ENCODE measurements at regions of chr14 and their contacts with region 1.

Region 1: GRCh38 chr14:73759714-73760597 is 45.8 kb upstream of the PNMA1 start:
- DNase-seq: peak; percentile 91 to 97 (median 93)
- ATAC-seq: peak; percentile 89
- H3K4me3 ChIP-seq: peak overlapping the region; percentile 72
- H3K4me3 Mint-ChIP-seq: peak overlapping the region; percentile 85 to 96 (median 90)
- H3K27ac ChIP-seq: peak overlapping the region; percentile 86
- H3K27ac Mint-ChIP-seq: peak overlapping the region; percentile 95 to 98 (median 97)
- H3K4me1 ChIP-seq: peaks cover 63 to 65% of the 10 kb centered on the region in 2 donors
- H3K4me1 Mint-ChIP-seq: peaks cover 57 to 87% (median 79%) of the 10 kb centered on the region in 7 donors
- H3K27me3 ChIP-seq: no peaks in the 10 kb centered on the region
- H3K27me3 Mint-ChIP-seq: no peaks in the 10 kb centered on the region

Region 2: GRCh38 chr14:72893636-72894321 is 866.2 kb before region 1 on chr14 and contains the start of gene DPF3:
- CTCF ChIA-PET with region 1: no interaction called
- POLR2A ChIA-PET with region 1: no interaction called
- intact Hi-C with region 1: no loop called
- DNase-seq: peak; percentile 80 to 91 (median 86)
- ATAC-seq: peak; percentile 99
- H3K4me3 ChIP-seq: peak within 1 kb of the TSS; percentile 74
- H3K4me3 Mint-ChIP-seq: peak within 1 kb of the TSS; percentile 91 to 99 (median 97)
- H3K27ac ChIP-seq: peak within 1 kb of the TSS; percentile 51
- H3K27ac Mint-ChIP-seq: peak within 1 kb of the TSS; percentile 22 to 94 (median 56)
- H3K4me1 ChIP-seq: peaks cover 9 to 20% of the 10 kb centered on the region in 2 donors
- H3K4me1 Mint-ChIP-seq: peaks cover 20 to 36% (median 24%) of the 10 kb centered on the region in 7 donors
- H3K27me3 ChIP-seq: peaks cover 6 to 10% of the 10 kb centered on the region in 2 donors
- H3K27me3 Mint-ChIP-seq: peaks cover 37 to 72% (median 53%) of the 10 kb centered on the region in 5 donors
- total RNA-seq, gene DPF3: 0.24 to 5.5 (median 0.61) TPM in 4 of 5 experiments, not detected in the other

Region 3: DNA sequence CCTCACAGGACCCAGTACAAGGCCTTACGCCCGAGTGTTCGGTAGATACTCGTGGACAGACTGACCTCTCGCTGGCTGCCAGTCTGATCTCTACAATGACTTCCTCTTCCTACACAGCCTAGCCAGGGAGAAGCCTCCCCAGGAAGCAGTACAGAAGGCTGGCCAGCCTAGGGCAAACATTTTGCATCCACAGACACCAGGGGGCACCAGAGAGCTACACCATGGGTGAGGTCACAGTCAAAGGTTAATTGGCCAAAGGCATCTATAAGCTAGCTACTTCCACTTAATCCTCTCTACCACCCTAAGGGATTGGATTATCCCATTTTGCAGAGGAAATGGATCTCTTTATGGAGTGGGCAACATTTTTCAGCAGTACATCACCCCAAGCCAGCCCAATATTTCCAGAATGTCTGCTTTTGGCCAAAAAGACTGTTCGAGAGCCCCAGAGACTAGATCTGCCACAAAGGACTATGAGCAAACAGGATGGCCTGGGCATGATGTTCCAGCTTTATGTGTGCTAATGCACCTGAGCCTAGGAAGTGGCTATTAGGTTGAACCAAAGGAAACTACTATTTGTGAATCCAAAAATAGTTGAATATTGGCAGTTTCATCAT is 31.1 kb before region 1 on chr14:
- CTCF ChIA-PET with region 1: interaction called, 31 read pairs
- POLR2A ChIA-PET with region 1: interaction called, 31 read pairs
- intact Hi-C with region 1: loop called (anchors 1 kb)
- DNase-seq: peak; percentile 65 to 91 (median 81)
- ATAC-seq: peak; percentile 96
- H3K4me3 ChIP-seq: no peak overlapping the region
- H3K4me3 Mint-ChIP-seq: peak overlapping the region in 1 of 10 donors; percentile 43
- H3K27ac ChIP-seq: no peak overlapping the region
- H3K27ac Mint-ChIP-seq: peak overlapping the region; percentile 60 to 90 (median 84)
- H3K4me1 ChIP-seq: peaks cover 4 to 12% of the 10 kb centered on the region in 2 donors
- H3K4me1 Mint-ChIP-seq: peaks cover 5 to 42% (median 16%) of the 10 kb centered on the region in 7 donors
- H3K27me3 ChIP-seq: no peaks in the 10 kb centered on the region
- H3K27me3 Mint-ChIP-seq: no peaks in the 10 kb centered on the region

Region 4: DNA sequence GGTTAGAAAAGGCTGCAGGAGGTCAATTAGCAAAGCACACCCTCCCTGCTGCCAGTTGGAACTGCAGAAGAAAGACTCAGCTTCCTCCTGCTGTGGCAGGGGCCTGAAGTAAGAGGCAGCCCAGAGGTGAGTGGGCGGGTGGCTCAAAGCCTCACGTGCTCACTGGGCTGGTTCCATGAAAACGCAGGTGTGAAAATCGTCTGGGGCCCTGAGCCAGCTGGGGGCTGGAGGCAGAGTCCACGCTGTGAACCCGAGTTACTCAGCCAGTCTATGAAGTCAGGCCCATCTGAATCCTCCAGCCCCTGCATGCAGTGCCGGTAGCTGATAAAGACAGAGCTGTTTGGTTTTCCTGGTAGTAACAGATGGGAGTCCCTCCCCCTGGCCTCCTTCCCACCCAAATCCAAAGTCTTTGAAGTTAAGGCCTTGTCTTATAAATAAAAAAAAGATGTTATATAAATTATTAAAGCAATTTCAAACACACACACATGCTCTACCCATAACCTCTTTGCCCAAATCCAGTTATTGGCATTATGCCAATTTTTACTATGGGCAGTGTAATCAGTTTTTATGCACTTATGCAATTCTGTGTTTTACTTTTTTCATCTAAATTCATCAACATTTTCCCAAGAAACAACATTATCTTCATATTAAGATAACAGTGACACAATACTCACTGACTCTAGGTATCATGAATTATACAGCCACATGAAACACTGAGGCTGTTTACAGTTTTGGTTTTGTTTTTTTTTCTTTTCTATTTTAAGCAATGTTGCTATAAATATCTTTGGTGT is 12.1 kb after region 1 on chr14:
- CTCF ChIA-PET with region 1: interaction called, 12 read pairs
- POLR2A ChIA-PET with region 1: interaction called, 81 read pairs
- intact Hi-C with region 1: loop called (anchors 1 kb)
- DNase-seq: peak in 8 of 9 donors; percentile 57 to 73 (median 65)
- ATAC-seq: peak; percentile 82
- H3K4me3 ChIP-seq: peak overlapping the region; percentile 24
- H3K4me3 Mint-ChIP-seq: peak overlapping the region; percentile 63 to 81 (median 74)
- H3K27ac ChIP-seq: peak overlapping the region; percentile 69
- H3K27ac Mint-ChIP-seq: peak overlapping the region; percentile 80 to 94 (median 92)
- H3K4me1 ChIP-seq: peaks cover 56 to 65% of the 10 kb centered on the region in 2 donors
- H3K4me1 Mint-ChIP-seq: peaks cover 57 to 79% (median 69%) of the 10 kb centered on the region in 7 donors
- H3K27me3 ChIP-seq: no peaks in the 10 kb centered on the region
- H3K27me3 Mint-ChIP-seq: no peaks in the 10 kb centered on the region

Region 5: GRCh38 chr14:73785873-73786695 is 26.1 kb after region 1 on chr14:
- CTCF ChIA-PET with region 1: interaction called, 23 read pairs
- POLR2A ChIA-PET with region 1: interaction called, 253 read pairs
- intact Hi-C with region 1: loop called (anchors 1 kb)
- DNase-seq: peak; percentile 41 to 65 (median 60)
- ATAC-seq: peak; percentile 74
- H3K4me3 ChIP-seq: peak overlapping the region; percentile 91
- H3K4me3 Mint-ChIP-seq: peak overlapping the region; percentile 87 to 99 (median 97)
- H3K27ac ChIP-seq: peak overlapping the region; percentile 96
- H3K27ac Mint-ChIP-seq: peak overlapping the region; percentile 92 to 97 (median 94)
- H3K4me1 ChIP-seq: peaks cover 45% of the 10 kb centered on the region in 2 donors
- H3K4me1 Mint-ChIP-seq: peaks cover 50 to 73% (median 66%) of the 10 kb centered on the region in 7 donors
- H3K27me3 ChIP-seq: no peaks in the 10 kb centered on the region
- H3K27me3 Mint-ChIP-seq: no peaks in the 10 kb centered on the region

Region 6: DNA sequence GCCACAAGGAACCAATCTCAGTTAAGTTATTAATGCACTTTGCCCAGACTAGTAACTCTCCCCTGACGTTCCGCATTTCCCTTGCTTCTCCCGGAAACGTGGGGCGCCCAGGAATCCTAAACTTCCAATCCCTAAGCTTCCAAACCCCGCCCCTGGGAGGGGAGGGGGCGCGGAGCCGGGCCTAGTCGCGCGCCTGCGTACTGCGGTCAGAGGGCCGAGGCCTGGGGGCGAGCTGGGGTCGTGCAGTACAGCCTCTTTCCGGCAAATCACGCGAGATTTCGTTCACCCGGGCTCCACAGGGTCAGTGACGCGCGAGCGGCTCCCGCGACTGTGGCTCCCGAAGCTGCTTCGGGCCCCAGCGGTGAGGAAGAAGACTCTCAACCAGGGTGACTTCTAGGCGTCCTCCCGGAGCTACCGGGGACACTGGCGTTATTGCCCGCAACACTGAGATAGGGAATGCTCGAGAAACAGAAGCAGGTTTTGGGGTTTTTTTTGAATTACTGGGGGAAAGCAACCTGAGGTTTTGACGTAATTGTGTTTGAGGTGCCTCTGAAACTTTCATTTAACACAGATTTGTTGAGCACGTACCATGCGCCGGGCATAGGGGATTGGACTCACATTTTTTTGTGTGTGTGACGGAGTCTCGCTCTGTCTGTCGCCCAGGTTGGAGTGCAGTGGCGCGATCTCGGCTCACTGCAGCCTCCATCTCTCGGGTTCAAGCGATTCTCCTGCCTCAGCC is 91.9 kb after region 1 on chr14 and contains the start of gene PTGR2:
- CTCF ChIA-PET with region 1: interaction called, 3 read pairs
- POLR2A ChIA-PET with region 1: interaction called, 6 read pairs
- intact Hi-C with region 1: loop called in 1 of 2 experiments (anchors 1 kb)
- DNase-seq: peak; percentile 79 to 92 (median 86)
- ATAC-seq: peak; percentile 98
- H3K4me3 ChIP-seq: peak within 1 kb of the TSS; percentile 76
- H3K4me3 Mint-ChIP-seq: peak within 1 kb of the TSS; percentile 88 to 99 (median 96)
- H3K27ac ChIP-seq: peak within 1 kb of the TSS; percentile 85
- H3K27ac Mint-ChIP-seq: peak within 1 kb of the TSS; percentile 92 to 99 (median 97)
- H3K4me1 ChIP-seq: peaks cover 8 to 9% of the 10 kb centered on the region in 2 donors
- H3K4me1 Mint-ChIP-seq: peaks cover 3 to 28% (median 21%) of the 10 kb centered on the region in 7 donors
- H3K27me3 ChIP-seq: no peaks in the 10 kb centered on the region
- H3K27me3 Mint-ChIP-seq: no peaks in the 10 kb centered on the region
- total RNA-seq, gene PTGR2: 1.2 to 7.9 (median 1.8) TPM

Region 7: DNA sequence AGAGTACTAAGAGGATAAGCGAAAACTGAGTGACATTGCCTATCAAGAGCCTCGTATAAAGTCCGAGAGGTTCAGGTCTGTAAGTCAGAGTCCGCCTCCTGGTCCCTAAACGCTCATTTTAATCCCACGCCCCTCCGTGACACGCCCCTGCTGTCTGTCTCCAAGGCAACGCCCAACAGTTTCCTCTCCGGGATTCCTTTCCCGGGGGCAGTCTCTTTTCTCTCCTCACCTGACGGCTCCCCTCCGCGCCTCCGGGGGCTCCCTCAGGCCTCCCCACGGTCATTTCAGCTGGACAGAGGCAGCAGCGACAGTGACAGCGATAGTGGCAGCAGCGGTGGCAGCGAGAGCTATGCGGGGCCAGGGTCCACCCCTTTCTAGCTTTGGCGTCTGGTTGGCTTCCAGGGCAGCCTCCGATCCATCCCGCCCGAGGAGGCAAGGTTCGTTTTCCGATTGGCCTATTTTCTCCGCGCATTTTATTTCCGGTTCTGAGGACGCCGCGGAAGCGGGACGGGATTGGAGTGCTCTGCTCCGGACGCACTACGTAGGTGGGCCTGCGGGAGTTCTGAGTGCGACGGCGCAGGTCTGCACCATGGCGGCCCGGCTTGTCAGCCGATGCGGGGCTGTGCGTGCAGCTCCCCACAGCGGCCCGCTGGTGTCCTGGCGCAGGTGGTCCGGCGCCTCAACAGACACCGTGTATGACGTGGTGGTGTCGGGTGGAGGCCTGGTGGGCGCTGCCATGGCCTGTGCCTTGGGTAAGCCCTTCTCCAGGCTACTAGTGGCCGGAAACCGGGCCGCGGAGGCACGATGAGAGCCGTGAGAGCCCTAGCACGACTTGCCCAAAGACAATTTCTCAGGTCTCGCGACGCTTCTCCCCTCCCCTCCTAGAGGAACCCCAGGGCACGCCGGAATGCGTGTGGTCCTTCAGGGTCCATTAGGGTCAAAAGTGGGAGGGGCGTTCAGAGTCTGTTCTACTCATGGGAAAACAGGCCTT is 190.1 kb after region 1 on chr14 and contains the starts of genes COQ6 and FAM161B:
- CTCF ChIA-PET with region 1: no interaction called
- POLR2A ChIA-PET with region 1: no interaction called
- intact Hi-C with region 1: loop called (anchors 1 kb)
- DNase-seq: peak; percentile 82 to 97 (median 95)
- ATAC-seq: peak; percentile 96
- H3K4me3 ChIP-seq: peak within 1 kb of the TSS; percentile 92
- H3K4me3 Mint-ChIP-seq: peak within 1 kb of the TSS; percentile 96 to 99 (median 98)
- H3K27ac ChIP-seq: peak within 1 kb of the TSS; percentile 94
- H3K27ac Mint-ChIP-seq: peak within 1 kb of the TSS; percentile 93 to 98 (median 95)
- H3K4me1 ChIP-seq: peaks cover 0 to 4% of the 10 kb centered on the region in 2 donors
- H3K4me1 Mint-ChIP-seq: peaks cover 5 to 34% (median 27%) of the 10 kb centered on the region in 7 donors
- H3K27me3 ChIP-seq: no peaks in the 10 kb centered on the region
- H3K27me3 Mint-ChIP-seq: no peaks in the 10 kb centered on the region
- total RNA-seq, gene COQ6: 22.8 to 47.3 (median 36.4) TPM
- total RNA-seq, gene FAM161B: 1.8 to 6.6 (median 3.7) TPM

Measured in naive thymus-derived CD4-positive, alpha-beta T cell (primary cell).